Activated CD8-positive, alpha-beta T cell treated with anti-CD3 and anti-CD28 coated beads, Interleukin-2, amount 10 ng/mL, durations not matched to agents 7 days and 5 days (primary cell): ENCODE measurements at regions of chr6 and their contacts with region 1.

Region 1: DNA sequence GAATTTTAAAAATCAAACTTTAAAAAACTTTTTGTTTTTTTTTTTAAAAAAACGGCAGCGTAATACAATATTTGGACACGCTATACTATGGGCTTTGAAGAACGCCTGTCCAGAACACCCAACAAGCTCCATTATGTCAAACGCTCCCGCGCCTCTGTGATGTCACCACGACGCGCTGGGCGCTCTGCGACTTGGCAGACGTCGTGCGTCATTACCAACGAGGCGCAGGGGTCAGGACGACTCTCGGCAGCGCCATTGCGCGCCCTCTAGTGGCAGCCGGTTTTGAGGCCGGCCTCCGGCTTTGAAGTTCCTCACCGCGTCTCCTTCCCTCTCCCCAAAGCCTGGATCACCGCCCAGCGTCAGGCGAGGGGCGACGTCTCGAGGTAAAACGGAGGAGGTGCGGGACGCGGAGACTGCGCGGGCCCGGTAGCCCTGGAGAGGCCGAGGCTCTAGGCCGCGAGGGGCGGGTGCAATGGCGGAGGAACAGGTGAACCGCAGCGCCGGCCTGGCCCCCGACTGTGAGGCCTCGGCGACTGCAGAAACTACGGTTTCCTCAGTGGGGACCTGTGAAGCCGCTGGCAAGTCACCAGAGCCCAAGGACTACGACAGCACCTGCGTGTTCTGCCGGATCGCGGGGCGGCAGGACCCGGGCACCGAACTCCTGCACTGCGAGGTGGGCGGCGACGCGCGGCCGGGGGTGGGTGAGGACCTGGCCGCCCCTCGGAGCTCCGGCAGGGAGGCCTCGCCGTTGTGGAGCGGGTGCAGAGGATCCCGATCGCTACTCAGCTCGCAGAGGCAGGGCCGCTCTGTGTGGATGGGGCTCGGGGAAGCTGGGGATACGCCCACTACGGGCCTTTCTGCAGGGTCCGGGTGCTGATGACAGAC is at the start of gene HINT3:
- DNase-seq: peak; percentile 98
- ATAC-seq: peak; percentile 90
- H3K4me3 Mint-ChIP-seq: no peak within 1 kb of the TSS
- H3K27ac Mint-ChIP-seq: peak within 1 kb of the TSS; percentile 41
- H3K4me1 Mint-ChIP-seq: peaks cover 5% of the 10 kb centered on the region
- H3K27me3 Mint-ChIP-seq: peaks cover 10% of the 10 kb centered on the region
- total RNA-seq, gene HINT3: 8.0 to 9.1 TPM

Region 2: GRCh38 chr6:125779924-125780539 is 176.7 kb before region 1 on chr6:
- CTCF ChIA-PET with region 1: interaction called, 48 read pairs
- POLR2A ChIA-PET with region 1: interaction called, 21 read pairs
- DNase-seq: peak; percentile 86
- ATAC-seq: peak; percentile 82
- H3K4me3 Mint-ChIP-seq: no peak overlapping the region
- H3K27ac Mint-ChIP-seq: no peak overlapping the region
- H3K4me1 Mint-ChIP-seq: peaks cover 11% of the 10 kb centered on the region
- H3K27me3 Mint-ChIP-seq: peaks cover 22% of the 10 kb centered on the region

Region 3: DNA sequence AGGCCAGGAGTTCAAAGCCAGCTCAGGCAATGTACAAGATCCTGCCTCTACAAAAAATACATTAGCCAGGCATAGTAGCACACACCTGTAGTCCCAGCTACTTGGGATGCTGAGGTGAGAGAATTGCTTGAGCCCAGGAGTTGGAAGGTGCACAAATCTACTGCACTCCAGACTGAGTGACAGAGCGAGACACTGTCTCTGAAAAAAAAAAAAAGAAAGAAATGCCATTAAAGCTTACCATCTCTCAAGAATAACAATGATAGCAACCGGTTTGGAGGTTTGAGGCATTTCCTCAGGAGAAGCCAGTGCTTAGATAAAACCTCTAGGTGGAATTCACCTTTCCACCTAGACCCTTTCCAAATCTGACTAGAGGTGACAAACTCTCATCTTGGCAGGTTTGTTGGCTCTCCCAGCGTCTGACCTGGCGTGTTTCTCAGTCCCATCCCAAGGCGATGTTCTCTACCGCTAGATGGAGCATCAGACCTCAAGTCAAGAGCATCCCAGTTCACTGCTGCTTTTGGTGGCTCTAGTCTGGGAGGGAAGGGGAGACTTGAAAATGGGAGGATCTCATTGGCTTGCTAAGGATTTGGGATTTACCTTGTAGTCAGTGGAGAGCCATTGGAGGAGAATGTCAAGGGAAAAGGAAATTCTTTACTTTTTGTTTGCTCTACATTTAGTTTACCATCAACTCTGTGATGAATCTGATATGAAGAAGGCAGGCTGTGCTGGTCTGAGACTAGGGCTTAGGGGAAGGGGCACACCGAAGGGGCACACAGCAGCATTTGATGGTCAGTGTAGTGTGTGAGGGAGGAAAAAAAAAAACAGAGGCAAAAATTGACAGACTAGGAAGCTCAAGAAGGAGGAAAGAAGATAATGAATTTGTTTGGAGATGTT is 98.1 kb before region 1 on chr6:
- CTCF ChIA-PET with region 1: interaction called, 20 read pairs
- POLR2A ChIA-PET with region 1: no interaction called
- DNase-seq: peak; percentile 42
- ATAC-seq: peak; percentile 71
- H3K4me3 Mint-ChIP-seq: no peak overlapping the region
- H3K27ac Mint-ChIP-seq: no peak overlapping the region
- H3K4me1 Mint-ChIP-seq: no peaks in the 10 kb centered on the region
- H3K27me3 Mint-ChIP-seq: no peaks in the 10 kb centered on the region

Region 4: DNA sequence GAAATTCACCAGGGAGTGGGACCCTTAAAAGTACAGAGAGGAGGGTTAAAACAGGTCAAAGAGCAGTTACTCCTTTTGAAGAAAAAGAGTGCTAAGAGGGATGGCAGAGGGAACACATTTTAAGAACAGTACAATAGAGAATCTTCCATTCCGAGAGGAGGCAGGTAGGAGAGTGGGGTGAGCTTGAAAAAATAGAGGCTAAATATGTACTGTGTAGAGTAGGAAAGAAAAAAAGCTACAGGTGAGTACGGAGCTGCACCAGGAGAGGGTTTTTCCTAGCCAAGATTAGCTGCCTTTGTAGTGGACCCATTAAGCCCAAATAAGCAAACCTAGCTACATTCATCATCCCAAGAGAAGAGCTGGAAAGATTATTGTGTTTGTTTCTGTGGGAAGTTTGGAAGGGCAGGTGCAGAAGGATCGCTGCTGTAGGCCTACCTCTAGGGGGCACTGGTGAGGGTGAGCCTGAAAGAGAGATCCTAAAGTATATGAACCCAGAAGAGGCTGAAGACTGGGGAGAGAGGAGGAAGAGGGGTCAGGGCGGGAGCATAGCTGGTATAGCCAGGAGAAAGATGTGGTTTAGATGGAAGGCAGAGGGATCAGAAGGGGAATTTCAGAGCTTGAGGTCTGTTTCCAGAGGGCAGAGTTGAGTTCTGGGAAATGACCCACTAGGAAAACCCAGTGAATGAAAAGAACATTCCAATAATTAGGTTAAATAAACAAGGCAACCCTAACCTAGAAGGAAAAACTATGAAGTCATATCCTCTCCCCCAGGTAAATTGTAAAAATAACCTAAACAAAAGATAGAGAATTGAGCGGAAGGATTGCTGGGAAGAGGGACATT is 50.4 kb before region 1 on chr6:
- CTCF ChIA-PET with region 1: interaction called, 40 read pairs
- POLR2A ChIA-PET with region 1: no interaction called
- DNase-seq: peak; percentile 59
- ATAC-seq: peak; percentile 45
- H3K4me3 Mint-ChIP-seq: no peak overlapping the region
- H3K27ac Mint-ChIP-seq: no peak overlapping the region
- H3K4me1 Mint-ChIP-seq: peaks cover 40% of the 10 kb centered on the region
- H3K27me3 Mint-ChIP-seq: no peaks in the 10 kb centered on the region

Region 5: GRCh38 chr6:125923987-125924568 is 32.7 kb before region 1 on chr6:
- CTCF ChIA-PET with region 1: interaction called, 60 read pairs
- POLR2A ChIA-PET with region 1: interaction called, 15 read pairs
- DNase-seq: peak; percentile 41
- ATAC-seq: peak; percentile 65
- H3K4me3 Mint-ChIP-seq: no peak overlapping the region
- H3K27ac Mint-ChIP-seq: peak overlapping the region; percentile 81
- H3K4me1 Mint-ChIP-seq: peaks cover 45% of the 10 kb centered on the region
- H3K27me3 Mint-ChIP-seq: no peaks in the 10 kb centered on the region

Region 6: DNA sequence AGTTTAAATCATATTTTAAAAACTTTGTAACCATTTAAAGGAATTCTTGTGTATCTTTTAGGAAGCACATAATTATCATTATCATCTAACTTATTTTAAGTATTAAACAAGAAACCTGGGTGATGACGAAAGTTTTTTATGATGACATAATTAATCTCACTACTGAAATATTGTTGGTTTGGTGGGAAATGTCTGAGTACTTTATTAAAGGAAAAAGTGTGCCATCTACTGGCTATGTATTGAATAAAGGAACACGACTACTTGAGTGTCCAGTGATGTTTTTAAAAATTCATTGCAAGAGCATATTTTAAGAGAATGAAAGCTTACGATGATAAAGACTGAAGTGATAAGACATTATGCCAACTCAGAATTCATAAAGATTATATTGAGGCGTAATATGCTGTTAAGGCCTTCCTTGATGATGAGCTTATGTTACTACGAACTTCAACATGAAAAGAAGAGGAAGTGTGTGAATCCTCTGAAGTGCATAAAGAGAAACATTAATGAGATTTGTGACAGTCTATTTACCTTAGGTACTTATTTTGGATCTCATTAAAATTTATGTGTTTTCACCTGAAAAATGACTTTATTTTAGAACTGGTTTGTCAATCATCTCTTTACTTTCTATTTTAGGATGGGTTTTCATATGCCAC is 17.6 kb after region 1 on chr6:
- CTCF ChIA-PET with region 1: interaction called, 60 read pairs
- POLR2A ChIA-PET with region 1: interaction called, 4 read pairs
- DNase-seq: no peak
- ATAC-seq: peak; percentile 81
- H3K4me3 Mint-ChIP-seq: no peak overlapping the region
- H3K27ac Mint-ChIP-seq: no peak overlapping the region
- H3K4me1 Mint-ChIP-seq: peaks cover 6% of the 10 kb centered on the region
- H3K27me3 Mint-ChIP-seq: no peaks in the 10 kb centered on the region